ENCODE measurements at regions of chr17 and their contacts with region 1.

Region 1: DNA sequence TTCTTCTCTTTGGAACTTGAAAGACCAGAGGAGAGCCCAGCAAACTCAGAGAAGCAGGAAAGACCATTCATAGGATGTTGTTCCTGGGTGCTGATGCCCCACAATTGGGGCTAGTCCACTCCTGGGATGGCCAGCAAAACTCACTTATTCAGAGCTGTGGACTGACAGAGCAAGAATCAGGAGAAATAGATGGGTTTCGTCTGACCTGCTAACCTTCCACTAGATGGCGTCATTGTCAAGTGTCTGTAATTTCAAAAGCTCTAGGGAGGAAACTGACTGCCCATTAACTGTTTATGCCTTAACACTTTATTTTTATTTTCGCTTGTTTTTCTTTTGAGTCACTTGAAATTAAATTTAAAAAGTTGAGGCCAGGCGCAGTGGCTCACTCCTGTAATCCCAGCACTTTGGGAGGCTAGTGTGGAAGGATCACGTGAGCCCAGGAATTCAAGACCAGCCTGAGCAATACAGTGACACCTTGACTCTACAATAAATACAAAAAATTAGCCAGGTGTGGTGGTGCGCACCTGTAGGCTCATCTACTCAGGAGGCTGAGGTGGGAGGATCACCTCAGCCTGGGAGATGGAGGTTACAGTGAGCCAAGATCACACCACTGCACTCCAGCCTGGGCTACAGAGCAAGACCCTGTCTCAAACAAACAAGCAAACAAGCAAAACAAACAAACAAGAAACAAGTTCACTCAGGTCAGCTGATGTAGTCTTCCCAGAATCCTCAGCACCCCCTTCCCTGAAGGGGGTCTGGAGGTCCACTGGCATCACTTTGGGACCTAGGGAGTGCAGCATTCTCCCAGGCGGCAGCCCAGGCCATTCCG is 28.6 kb upstream of the MILR1 start:
- DNase-seq: no peak
- H3K4me3 ChIP-seq: no peak overlapping the region
- H3K27ac ChIP-seq: no peak overlapping the region
- H3K4me1 ChIP-seq: peaks cover 0 to 3% (median 0%) of the 10 kb centered on the region in 4 experiments; a peak in 1 of 7 replicates
- H3K27me3 ChIP-seq: no peaks in the 10 kb centered on the region
- CTCF ChIP-seq: peak in 2 of 3 experiments; percentile 61 to 78; a peak in 3 of 4 replicates
- EP300 ChIP-seq: no peak
- POLR2A ChIP-seq: no peak
- RAD21 ChIP-seq: peak; percentile 82

Region 2: GRCh38 chr17:64164596-64165285 is 255.6 kb before region 1 on chr17:
- CTCF ChIA-PET with region 1: no interaction called
- POLR2A ChIA-PET with region 1: no interaction called
- DNase-seq: no peak
- H3K4me3 ChIP-seq: no peak overlapping the region
- H3K27ac ChIP-seq: no peak overlapping the region
- H3K4me1 ChIP-seq: no peaks in the 10 kb centered on the region
- H3K27me3 ChIP-seq: no peaks in the 10 kb centered on the region
- CTCF ChIP-seq: no peak
- EP300 ChIP-seq: no peak
- POLR2A ChIP-seq: no peak
- RAD21 ChIP-seq: no peak

Region 3: GRCh38 chr17:64326395-64327054 is 93.8 kb before region 1 on chr17:
- CTCF ChIA-PET with region 1: interaction called, 348 read pairs
- POLR2A ChIA-PET with region 1: no interaction called
- DNase-seq: no peak
- H3K4me3 ChIP-seq: no peak overlapping the region
- H3K27ac ChIP-seq: no peak overlapping the region
- H3K4me1 ChIP-seq: no peaks in the 10 kb centered on the region
- H3K27me3 ChIP-seq: no peaks in the 10 kb centered on the region
- CTCF ChIP-seq: no peak
- EP300 ChIP-seq: no peak
- POLR2A ChIP-seq: no peak
- RAD21 ChIP-seq: no peak

Region 4: GRCh38 chr17:64369007-64369893 is 51.1 kb before region 1 on chr17:
- CTCF ChIA-PET with region 1: no interaction called
- POLR2A ChIA-PET with region 1: no interaction called
- DNase-seq: no peak
- H3K4me3 ChIP-seq: no peak overlapping the region
- H3K27ac ChIP-seq: no peak overlapping the region
- H3K4me1 ChIP-seq: no peaks in the 10 kb centered on the region
- H3K27me3 ChIP-seq: no peaks in the 10 kb centered on the region; a peak in 1 of 7 replicates
- CTCF ChIP-seq: no peak
- EP300 ChIP-seq: no peak
- POLR2A ChIP-seq: no peak
- RAD21 ChIP-seq: no peak

Region 5: DNA sequence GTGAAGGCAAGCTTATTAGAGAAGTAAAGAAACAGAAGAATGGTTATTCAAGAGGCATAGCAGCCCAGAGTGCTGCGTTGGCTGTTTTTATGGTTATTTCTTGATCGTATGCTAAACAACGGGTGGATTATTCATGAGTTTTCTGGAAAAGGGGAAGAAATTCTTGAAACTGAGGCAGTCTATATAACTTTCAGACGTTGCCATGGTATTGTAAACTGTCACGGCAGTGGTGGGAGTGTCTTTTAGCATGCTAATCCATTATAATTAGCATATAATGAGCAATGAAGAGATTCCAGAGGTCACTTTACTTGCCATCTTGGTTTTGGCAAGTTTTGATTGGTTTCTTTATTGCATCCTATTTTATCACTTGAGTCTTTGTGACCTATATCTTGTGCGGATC is 11.2 kb after region 1 on chr17:
- CTCF ChIA-PET with region 1: interaction called, 29 read pairs
- POLR2A ChIA-PET with region 1: no interaction called
- DNase-seq: no peak
- H3K4me3 ChIP-seq: no peak overlapping the region
- H3K27ac ChIP-seq: no peak overlapping the region
- H3K4me1 ChIP-seq: no peaks in the 10 kb centered on the region
- H3K27me3 ChIP-seq: no peaks in the 10 kb centered on the region
- CTCF ChIP-seq: no peak
- EP300 ChIP-seq: no peak
- POLR2A ChIP-seq: no peak
- RAD21 ChIP-seq: no peak

Region 6: GRCh38 chr17:64470625-64471024 is 50.3 kb after region 1 on chr17:
- CTCF ChIA-PET with region 1: interaction called, 14 read pairs
- POLR2A ChIA-PET with region 1: no interaction called
- DNase-seq: no peak
- H3K4me3 ChIP-seq: no peak overlapping the region
- H3K27ac ChIP-seq: no peak overlapping the region
- H3K4me1 ChIP-seq: peaks cover 0 to 5% (median 0%) of the 10 kb centered on the region in 4 experiments; a peak in 3 of 7 replicates
- H3K27me3 ChIP-seq: no peaks in the 10 kb centered on the region
- CTCF ChIP-seq: no peak
- EP300 ChIP-seq: no peak
- POLR2A ChIP-seq: no peak
- RAD21 ChIP-seq: no peak

Region 7: GRCh38 chr17:64496786-64497564 is 76.6 kb after region 1 on chr17 and contains the start of gene POLG2:
- CTCF ChIA-PET with region 1: interaction called, 112 read pairs
- POLR2A ChIA-PET with region 1: interaction called, 39 read pairs
- DNase-seq: peak; percentile 73 to 94
- H3K4me3 ChIP-seq: peak within 1 kb of the TSS; percentile 67 to 92 (median 80)
- H3K27ac ChIP-seq: peak within 1 kb of the TSS; percentile 85
- H3K4me1 ChIP-seq: peaks cover 0 to 7% (median 3%) of the 10 kb centered on the region in 4 experiments; a peak in 5 of 7 replicates
- H3K27me3 ChIP-seq: no peaks in the 10 kb centered on the region
- CTCF ChIP-seq: peak; percentile 33 to 65 (median 51); a peak in 3 of 4 replicates
- EP300 ChIP-seq: no peak
- POLR2A ChIP-seq: peak; percentile 55 to 87
- RAD21 ChIP-seq: peak; percentile 38 to 41; a peak in 3 of 4 replicates
- total RNA-seq, gene POLG2: 30.9 and 34.3 TPM in 2 replicates

Measured in H1 (cell line).